Activated CD4-positive, alpha-beta T cell treated with anti-CD3 and anti-CD28 coated beads, Interleukin-2, amount 10 ng/mL, durations not matched to agents 24 days and 14 days (primary cell): ENCODE measurements at regions of chr7 and their contacts with region 1.

Region 1: DNA sequence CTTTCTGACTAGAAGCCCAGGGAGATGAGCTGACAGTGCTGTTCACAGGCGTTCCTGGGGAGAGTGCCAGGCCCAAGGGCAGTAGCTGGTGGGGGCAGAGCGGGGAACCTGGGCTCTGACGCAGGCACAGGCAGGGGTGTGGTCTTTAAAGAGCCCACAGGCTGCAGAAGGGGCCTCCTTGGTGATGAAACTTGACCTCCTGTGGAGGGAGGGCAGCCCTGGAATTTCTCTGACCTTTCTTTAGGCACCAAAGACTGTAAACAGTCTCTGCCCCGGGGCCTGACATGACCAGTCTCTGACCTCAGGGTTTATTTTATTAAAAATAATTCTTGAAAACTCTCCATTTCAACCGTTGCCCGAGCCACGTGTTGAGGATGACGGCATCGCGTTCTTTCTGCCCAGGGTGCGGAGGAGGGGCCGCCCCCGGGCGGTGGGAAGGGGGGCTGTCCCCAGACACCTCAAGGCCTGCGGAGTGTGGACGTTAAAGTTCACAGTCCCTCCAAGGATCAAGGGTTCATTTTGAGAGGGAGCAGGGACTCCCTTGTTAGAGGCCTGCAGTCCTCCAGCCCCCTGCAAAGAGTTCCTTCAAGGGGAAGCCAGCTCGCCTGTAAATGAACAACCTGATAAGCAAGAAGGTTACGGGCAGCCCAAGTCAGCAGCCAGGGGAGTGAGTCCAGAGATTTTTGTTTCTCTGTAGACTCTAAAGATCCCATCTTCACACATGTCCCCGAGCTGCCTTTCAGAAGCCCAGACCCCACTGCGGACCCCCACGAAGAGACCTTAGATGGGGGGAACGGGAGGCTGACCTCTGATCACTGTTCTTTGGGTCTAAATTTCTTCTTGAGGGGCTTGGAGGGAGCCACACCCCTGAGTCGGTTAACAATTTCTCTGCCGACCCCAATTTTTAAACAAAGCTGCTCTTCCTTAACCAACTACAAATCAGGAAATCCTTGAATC is 128.9 kb downstream of the VIPR2 start:
- DNase-seq: no peak
- H3K4me3 Mint-ChIP-seq: no peak overlapping the region
- H3K27ac Mint-ChIP-seq: no peak overlapping the region
- H3K4me1 Mint-ChIP-seq: peaks cover 14% of the 10 kb centered on the region
- H3K27me3 Mint-ChIP-seq: no peaks in the 10 kb centered on the region

Region 2: DNA sequence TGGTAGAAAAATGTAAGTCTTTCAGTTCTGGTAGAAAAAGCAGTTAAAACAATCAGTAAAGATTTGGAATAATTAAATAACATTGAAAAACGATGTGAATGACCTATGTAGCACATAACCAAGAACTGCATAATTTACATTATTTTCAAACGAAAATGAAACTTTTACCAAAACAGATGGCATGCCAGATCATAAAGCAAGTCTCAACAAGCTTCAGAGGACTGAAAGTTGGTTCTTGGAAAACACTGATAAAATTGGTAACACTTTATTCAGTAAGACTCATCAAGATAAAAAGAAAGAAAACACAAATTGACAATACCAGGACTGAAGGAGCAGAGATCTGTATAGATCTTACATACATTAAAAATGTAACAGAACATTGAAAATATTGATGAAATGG is 36.2 kb after region 1 on chr7:
- intact Hi-C with region 1: loop called (anchors 1 kb)
- DNase-seq: no peak
- H3K4me3 Mint-ChIP-seq: peak overlapping the region; percentile 25
- H3K27ac Mint-ChIP-seq: peak overlapping the region; percentile 44
- H3K4me1 Mint-ChIP-seq: peaks cover 22% of the 10 kb centered on the region
- H3K27me3 Mint-ChIP-seq: peaks cover 3% of the 10 kb centered on the region

Region 3: GRCh38 chr7:159068488-159068811 is 52.7 kb after region 1 on chr7:
- intact Hi-C with region 1: no loop called
- DNase-seq: peak; percentile 61
- H3K4me3 Mint-ChIP-seq: no peak overlapping the region
- H3K27ac Mint-ChIP-seq: no peak overlapping the region
- H3K4me1 Mint-ChIP-seq: peaks cover 26% of the 10 kb centered on the region
- H3K27me3 Mint-ChIP-seq: no peaks in the 10 kb centered on the region

Region 4: DNA sequence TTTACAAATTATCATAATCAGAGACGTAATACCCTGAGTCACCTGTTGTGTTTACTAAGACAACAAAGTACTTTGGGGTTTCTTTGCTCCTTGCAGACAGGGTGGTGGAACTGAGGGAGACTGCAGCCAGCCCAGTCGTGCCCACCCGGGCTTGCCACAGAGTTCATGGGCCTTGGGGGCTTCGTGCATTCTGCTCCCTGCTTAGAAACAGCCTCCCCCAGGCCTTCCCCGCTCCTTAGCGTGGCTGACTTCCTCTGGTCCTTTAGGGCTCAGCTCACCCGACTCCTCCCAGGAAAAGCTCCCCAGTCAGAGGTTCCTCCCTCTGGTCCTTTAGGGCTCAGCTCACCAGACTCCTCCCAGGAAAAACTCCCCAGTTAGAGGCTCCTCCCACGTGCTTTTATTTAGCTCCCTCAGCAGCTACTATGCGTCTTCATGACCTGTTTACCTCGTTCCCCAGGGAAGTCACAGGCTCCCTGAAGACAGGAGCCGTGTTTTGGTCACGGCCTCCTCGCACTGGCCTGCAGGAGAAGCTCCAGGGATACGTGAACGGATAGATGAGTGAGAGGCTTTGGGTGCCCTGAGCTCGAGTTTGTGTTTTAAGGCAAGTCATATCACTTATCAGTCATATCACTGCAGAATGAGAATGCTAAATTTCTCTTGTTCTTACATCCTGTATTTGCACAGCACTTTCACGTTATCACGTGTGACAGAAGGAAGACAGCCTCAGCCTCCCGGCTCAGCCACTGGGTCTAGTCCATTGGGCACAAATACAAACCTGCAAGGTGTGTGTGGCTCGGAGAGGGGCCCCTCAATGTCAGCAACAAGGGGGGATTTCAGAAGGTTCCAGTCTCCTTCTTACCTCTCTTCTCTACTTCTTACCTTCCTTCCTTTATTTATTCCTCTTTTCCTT is 181.6 kb after region 1 on chr7:
- intact Hi-C with region 1: loop called (anchors 5 kb)
- DNase-seq: peak; percentile 85
- H3K4me3 Mint-ChIP-seq: peak overlapping the region; percentile 79
- H3K27ac Mint-ChIP-seq: peak overlapping the region; percentile 97
- H3K4me1 Mint-ChIP-seq: peaks cover 23% of the 10 kb centered on the region
- H3K27me3 Mint-ChIP-seq: no peaks in the 10 kb centered on the region